Right lobe of liver (tissue), 6 donors: ENCODE measurements at regions of chr13 and their contacts with region 1.

Region 1: DNA sequence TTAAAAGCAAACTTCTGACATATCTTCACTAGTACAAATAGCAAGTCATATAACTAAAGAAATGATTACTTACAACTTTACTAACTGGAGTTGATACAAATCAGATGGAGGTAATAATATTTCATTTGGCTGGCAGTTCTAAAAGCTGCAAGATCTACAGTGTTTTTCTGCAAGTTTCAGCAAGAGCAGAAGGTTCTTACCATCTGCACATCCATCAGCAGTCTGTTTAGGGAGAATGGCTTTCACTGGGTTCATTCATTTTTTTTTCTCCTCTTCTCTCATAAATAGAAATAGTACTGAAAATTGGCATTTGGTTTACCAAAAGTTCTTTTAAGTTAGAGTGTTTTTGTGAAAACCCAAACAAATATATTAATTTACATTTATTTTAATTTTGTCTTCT is 3.1 kb upstream of the SHISA2 start:
- DNase-seq: no peak
- ATAC-seq: no peak
- H3K4me3 ChIP-seq: no peak overlapping the region
- H3K27ac ChIP-seq: no peak overlapping the region
- H3K4me1 ChIP-seq: no peaks in the 10 kb centered on the region
- H3K27me3 ChIP-seq: peaks cover 11 to 17% of the 10 kb centered on the region in 2 donors
- CTCF ChIP-seq: no peak
- POLR2A ChIP-seq: no peak

Region 2: DNA sequence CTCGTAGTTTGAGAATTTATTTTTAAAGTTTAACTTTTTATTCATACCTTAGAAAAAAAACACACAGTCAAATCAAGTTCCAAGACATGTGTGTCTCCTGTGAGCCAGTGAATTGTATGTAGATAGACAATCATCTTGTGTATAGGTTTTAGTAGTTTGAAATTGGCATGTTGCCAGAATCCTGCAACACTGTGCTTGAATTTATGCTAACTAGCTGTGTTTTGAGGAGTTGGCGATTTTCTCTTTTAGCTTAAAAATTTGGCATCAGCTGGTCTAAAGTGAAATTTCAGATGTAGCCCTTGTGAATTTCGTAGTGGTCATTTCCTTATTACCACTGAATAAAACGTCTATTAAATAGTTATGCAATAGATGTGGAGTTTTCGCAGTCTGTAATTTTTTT is 469.9 kb before region 1 on chr13:
- intact Hi-C with region 1: loop called in 1 of 2 experiments (anchors 5 kb)
- DNase-seq: no peak
- ATAC-seq: no peak
- H3K4me3 ChIP-seq: no peak overlapping the region
- H3K27ac ChIP-seq: no peak overlapping the region
- H3K4me1 ChIP-seq: no peaks in the 10 kb centered on the region
- H3K27me3 ChIP-seq: no peaks in the 10 kb centered on the region
- CTCF ChIP-seq: no peak
- POLR2A ChIP-seq: no peak